Ovary (tissue), 10 donors: ENCODE measurements at regions of chr11 and their contacts with region 1.

Region 1: GRCh38 chr11:126194121-126194543 is 17.3 kb downstream of the RPUSD4 start:
- DNase-seq: peak; percentile 38 to 73 (median 65)
- H3K4me3 ChIP-seq: no peak overlapping the region
- H3K27ac ChIP-seq: no peak overlapping the region
- H3K4me1 ChIP-seq: no peaks in the 10 kb centered on the region
- H3K27me3 ChIP-seq: no peaks in the 10 kb centered on the region
- CTCF ChIP-seq: peak; percentile 65 to 92 (median 90)
- EP300 ChIP-seq: no peak
- POLR2A ChIP-seq: no peak

Region 2: DNA sequence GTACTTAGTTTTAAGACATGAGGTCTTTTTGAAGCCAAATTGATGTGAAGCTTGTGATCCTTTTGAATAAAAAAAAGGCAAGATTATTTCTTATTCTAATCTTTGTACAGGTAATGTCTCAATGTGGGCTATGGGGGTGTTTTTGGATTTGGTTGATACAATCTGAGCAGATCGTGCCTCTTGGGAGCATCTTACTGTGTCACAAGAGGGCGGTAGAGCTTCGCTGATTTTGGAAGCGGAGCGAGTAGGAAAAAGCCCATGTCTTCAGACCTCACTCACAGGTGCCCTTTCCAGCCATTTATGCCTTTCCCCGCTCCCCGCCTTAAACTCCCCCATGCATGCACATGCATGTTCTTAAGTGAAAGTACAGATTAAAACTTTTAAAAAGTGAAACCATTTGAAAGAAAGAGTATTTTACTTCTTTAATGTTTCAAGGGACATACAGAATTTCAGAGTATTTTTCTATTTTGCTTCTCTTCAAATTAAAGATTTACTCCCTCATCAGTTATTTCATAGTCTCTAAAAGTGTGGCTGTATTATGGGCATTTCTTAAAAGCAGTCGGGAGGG is 271.0 kb before region 1 on chr11:
- intact Hi-C with region 1: loop called (anchors 2 to 5 kb)
- DNase-seq: peak; percentile 65 to 82 (median 74)
- H3K4me3 ChIP-seq: no peak overlapping the region
- H3K27ac ChIP-seq: no peak overlapping the region
- H3K4me1 ChIP-seq: no peaks in the 10 kb centered on the region
- H3K27me3 ChIP-seq: no peaks in the 10 kb centered on the region
- CTCF ChIP-seq: peak; percentile 66 to 79 (median 73)
- EP300 ChIP-seq: no peak
- POLR2A ChIP-seq: no peak

Region 3: DNA sequence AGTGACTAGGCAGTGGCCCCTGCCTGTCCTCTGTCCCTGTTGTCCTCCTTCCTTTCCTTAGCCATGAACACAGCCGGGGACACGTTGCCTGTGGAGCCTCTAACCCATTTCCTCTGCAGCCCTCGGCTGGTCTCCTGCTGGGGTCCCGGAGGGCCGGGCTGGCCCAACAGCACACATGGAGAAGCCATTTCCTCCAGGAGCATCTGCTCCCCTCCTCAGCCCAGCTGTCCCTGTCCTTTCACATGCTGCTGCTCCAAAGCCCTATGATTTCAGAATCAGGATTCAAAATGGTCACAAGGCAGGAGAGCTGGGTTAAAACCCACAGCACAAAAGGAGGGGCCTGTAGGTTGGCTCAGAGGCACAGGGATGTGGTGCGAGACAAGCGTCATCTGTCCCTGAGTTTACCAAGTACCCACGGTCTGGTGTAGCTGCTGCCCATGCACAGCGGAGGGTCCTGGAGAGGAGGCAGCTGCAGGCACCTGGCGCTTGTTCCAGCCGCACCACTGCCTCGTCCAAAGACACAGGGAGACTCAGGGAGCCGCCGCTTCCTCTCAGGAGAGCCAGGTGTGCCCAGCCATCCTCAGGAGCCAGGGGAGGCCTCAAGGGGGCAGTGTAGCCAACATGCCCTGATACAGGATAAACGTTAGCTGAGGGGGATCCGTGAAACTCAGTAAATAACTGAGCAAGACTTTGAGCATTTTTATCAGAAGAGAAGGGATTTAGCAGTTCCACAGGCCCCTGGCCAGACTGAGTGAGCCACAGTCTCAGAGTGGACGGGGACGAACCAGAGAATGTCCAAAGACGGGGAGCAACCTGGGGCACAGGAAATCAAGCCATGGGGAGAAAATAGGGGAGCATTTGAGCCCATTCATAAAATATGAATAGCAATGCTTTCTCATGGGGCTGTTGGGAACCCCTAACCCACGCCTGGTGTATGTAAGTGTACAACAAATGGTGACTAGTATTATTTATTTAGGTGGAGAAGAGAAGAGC is 252.2 kb before region 1 on chr11:
- intact Hi-C with region 1: loop called in 1 of 4 experiments (anchors 5 kb)
- DNase-seq: peak; percentile 55 to 75 (median 72)
- H3K4me3 ChIP-seq: no peak overlapping the region
- H3K27ac ChIP-seq: no peak overlapping the region
- H3K4me1 ChIP-seq: peaks cover 1% of the 10 kb centered on the region
- H3K27me3 ChIP-seq: no peaks in the 10 kb centered on the region
- CTCF ChIP-seq: peak in 2 of 3 donors; percentile 32 to 39
- EP300 ChIP-seq: no peak
- POLR2A ChIP-seq: no peak

Region 4: DNA sequence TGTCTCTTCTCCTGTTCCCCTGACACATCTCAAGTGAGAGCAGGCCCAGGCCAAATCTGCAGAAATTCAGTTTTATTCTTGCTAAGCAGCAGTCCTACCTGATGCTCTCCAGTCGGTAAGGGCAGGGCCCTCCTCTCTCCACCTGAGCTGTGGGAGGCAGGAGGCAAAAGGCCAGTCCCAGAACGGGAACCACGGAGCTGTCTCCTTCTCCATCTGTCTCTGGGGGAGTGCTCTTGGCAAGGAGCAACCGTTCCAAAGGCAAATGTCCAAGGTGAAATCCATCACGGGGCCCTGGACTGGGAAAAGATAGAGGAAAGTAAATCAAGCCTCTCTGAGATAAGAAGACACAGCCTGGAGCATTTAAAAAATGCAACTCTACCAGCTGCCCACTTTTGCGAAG is 66.2 kb before region 1 on chr11:
- intact Hi-C with region 1: no loop called
- DNase-seq: peak; percentile 75 to 80 (median 75)
- H3K4me3 ChIP-seq: no peak overlapping the region
- H3K27ac ChIP-seq: peak overlapping the region in 1 of 2 donors; percentile 69
- H3K4me1 ChIP-seq: peaks cover 35% of the 10 kb centered on the region
- H3K27me3 ChIP-seq: no peaks in the 10 kb centered on the region
- CTCF ChIP-seq: no peak
- EP300 ChIP-seq: no peak
- POLR2A ChIP-seq: no peak